Psoas muscle (tissue), 8 donors: ENCODE measurements at regions of chr4 and their contacts with region 1.

Region 1: DNA sequence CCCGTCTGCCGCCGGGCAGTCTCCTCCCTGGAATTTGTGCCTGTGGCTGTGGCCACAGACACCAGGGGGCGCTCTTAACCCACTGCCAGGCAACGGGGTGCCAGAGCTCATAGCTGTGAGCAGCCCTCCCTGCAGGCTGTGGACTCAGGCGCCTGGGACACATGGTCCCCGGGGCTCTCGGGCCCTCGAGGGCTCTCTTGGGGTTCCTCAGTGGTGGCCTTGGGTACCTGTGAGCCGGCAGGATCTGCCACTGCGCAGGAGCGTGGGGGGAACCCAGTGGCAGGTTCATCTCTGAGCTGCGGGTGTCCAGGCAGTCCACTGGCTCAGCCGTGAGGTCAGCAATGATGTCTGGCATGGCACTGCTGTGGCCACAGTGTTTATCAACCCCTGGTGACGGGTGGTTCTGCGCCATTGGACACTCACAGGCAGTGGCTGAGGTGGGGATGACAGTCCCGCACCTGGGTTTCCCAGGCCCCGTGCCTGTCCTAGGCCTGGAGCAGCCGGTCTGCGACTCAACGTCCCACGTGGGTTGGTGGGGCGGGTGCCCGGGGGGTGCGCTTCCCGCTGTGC is 37.2 kb downstream of the PCGF3 start:
- DNase-seq: peak; percentile 67 to 85
- ATAC-seq: peak; percentile 83 to 91 (median 90)
- H3K4me3 ChIP-seq: no peak overlapping the region
- H3K27ac ChIP-seq: no peak overlapping the region
- H3K4me1 ChIP-seq: no peaks in the 10 kb centered on the region
- H3K27me3 ChIP-seq: no peaks in the 10 kb centered on the region
- CTCF ChIP-seq: peak; percentile 85

Region 2: GRCh38 chr4:931960-932712 is 189.3 kb after region 1 on chr4 and contains the starts of genes GAK and TMEM175:
- intact Hi-C with region 1: loop called in 1 of 2 experiments (anchors 5 kb)
- DNase-seq: peak; percentile 96 to 98
- ATAC-seq: peak; percentile 96 to 99 (median 97)
- H3K4me3 ChIP-seq: peak within 1 kb of the TSS; percentile 99
- H3K27ac ChIP-seq: peak within 1 kb of the TSS; percentile 99
- H3K4me1 ChIP-seq: peaks cover 30% of the 10 kb centered on the region
- H3K27me3 ChIP-seq: no peaks in the 10 kb centered on the region
- CTCF ChIP-seq: no peak
- total RNA-seq, gene GAK: 20.9 to 46.7 (median 29.9) TPM
- total RNA-seq, gene TMEM175: 11.7 to 15.3 (median 14.7) TPM

Region 3: GRCh38 chr4:986879-987623 is 244.2 kb after region 1 on chr4 and contains the start of gene IDUA:
- intact Hi-C with region 1: loop called (anchors 5 to 10 kb)
- DNase-seq: peak; percentile 86
- ATAC-seq: peak; percentile 77 to 89 (median 84)
- H3K4me3 ChIP-seq: peak within 1 kb of the TSS; percentile 84
- H3K27ac ChIP-seq: peak within 1 kb of the TSS; percentile 51
- H3K4me1 ChIP-seq: peaks cover 12% of the 10 kb centered on the region
- H3K27me3 ChIP-seq: no peaks in the 10 kb centered on the region
- CTCF ChIP-seq: peak; percentile 37
- total RNA-seq, gene IDUA: 5.1 to 6.0 (median 5.7) TPM